ENCODE measurements at regions of chr15 and their contacts with region 1.

Region 1: DNA sequence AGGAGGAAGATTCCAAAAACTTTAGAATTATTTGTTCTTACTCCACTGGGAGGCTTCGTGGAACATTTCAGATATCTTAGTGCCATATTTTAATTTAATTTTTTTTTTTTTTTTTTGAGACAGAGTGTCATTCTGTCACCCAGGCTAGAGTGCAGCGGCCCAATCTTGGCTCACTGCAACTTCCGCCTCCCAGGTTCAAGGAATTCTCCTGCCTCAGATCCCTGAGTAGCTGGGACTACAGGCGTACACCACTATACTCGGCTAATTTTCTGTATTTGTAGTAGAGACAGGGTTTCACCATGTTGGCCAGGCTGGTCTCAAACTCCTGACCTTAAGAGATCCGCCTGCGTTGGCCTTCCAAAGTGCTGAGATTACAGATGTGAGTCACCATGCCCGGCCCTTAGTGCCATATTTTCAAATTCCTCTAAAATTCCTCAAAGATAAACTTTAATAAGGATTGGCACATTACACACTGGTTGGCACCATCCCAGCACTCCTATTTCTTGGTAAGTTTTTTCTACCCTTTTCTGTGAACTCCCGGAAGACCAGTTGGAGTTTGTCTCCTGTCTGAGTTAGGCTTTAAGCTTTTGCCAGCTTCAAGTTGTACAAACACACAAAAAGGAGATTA is 693.7 kb downstream of the MCTP2 start:
- DNase-seq: peak; percentile 41 to 77
- H3K4me3 ChIP-seq: no peak overlapping the region
- H3K27ac ChIP-seq: peak overlapping the region; percentile 8 to 59
- H3K4me1 ChIP-seq: peaks cover 0 to 55% (median 9%) of the 10 kb centered on the region in 4 donors
- H3K27me3 ChIP-seq: no peaks in the 10 kb centered on the region
- CTCF ChIP-seq: no peak

Region 2: GRCh38 chr15:94174399-94174802 is 750.7 kb before region 1 on chr15:
- intact Hi-C with region 1: no loop called
- DNase-seq: no peak
- H3K4me3 ChIP-seq: no peak overlapping the region
- H3K27ac ChIP-seq: no peak overlapping the region
- H3K4me1 ChIP-seq: no peaks in the 10 kb centered on the region
- H3K27me3 ChIP-seq: no peaks in the 10 kb centered on the region
- CTCF ChIP-seq: no peak

Region 3: DNA sequence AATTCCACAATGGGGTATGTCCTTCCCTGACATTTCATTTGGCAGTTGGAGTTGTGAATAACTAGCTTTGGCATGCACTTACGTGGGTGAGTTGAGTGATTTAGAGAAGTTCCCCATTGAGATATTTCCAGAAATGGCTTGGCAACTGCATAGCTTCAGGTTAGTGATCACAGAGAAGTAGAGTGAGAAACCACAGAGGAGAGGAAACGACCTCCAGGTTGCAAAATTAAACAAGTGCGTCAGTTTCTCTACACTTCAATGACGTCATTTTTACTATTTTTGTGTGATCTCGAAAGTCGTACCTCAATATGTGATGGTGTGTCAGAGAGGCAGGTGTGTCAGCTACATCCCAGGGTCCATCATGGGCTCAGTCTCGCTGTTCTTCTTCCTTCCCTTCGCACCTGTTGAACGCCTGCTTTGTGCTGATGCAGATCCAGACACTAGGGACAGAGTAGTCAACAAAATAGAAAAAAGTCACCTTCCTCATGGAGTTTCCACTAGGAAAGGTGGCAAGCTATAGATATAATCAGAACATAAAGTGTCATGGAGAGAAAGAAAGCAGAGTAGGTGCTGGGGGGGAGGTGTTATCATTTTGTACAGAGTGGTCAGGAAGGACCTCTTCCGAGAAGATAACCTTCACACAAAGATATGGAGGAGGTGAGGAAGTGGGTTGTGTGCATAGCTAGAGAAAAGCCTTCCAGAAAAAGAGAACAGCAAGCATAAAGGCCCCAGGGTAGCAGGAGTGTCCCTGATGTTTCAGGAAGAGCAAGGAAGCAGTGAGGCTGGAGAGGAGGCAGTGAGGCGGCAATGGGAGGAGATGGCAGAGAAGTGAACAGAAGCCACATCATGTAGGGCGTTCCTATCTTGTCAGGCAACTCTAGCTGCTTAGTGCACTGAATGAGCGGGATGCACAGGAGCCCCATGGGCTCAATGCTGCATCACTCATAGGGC is 618.1 kb before region 1 on chr15:
- intact Hi-C with region 1: no loop called
- DNase-seq: no peak
- H3K4me3 ChIP-seq: no peak overlapping the region
- H3K27ac ChIP-seq: no peak overlapping the region
- H3K4me1 ChIP-seq: no peaks in the 10 kb centered on the region
- H3K27me3 ChIP-seq: no peaks in the 10 kb centered on the region
- CTCF ChIP-seq: no peak

Region 4: GRCh38 chr15:94793641-94794040 is 131.4 kb before region 1 on chr15:
- intact Hi-C with region 1: no loop called
- DNase-seq: no peak
- H3K4me3 ChIP-seq: no peak overlapping the region
- H3K27ac ChIP-seq: no peak overlapping the region
- H3K4me1 ChIP-seq: no peaks in the 10 kb centered on the region
- H3K27me3 ChIP-seq: no peaks in the 10 kb centered on the region
- CTCF ChIP-seq: no peak

Region 5: GRCh38 chr15:94829887-94830884 is 94.9 kb before region 1 on chr15:
- intact Hi-C with region 1: loop called (anchors 10 kb)
- DNase-seq: no peak
- H3K4me3 ChIP-seq: no peak overlapping the region
- H3K27ac ChIP-seq: no peak overlapping the region
- H3K4me1 ChIP-seq: peaks cover 0 to 5% (median 0%) of the 10 kb centered on the region in 4 donors
- H3K27me3 ChIP-seq: no peaks in the 10 kb centered on the region
- CTCF ChIP-seq: no peak

Region 6: DNA sequence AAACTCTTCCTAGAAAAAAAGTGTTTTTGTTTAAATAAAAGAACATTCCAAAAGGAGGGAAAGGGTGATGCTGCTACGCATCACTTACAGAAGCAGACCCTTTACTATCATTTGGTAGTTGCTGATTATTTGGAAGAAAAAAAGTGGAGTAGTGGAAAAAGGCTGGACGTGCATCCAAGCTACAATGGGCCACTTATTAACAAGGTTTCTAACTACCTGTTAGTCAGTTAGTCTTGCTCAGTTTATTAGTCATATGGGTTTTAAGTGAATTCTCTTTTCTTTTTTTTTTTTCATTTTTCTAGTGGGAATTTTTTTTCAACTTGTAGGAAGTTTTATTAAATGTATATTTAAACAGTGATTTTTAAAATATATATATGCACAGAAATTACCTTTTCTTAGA is 172.3 kb after region 1 on chr15:
- intact Hi-C with region 1: no loop called
- DNase-seq: no peak
- H3K4me3 ChIP-seq: no peak overlapping the region
- H3K27ac ChIP-seq: no peak overlapping the region
- H3K4me1 ChIP-seq: no peaks in the 10 kb centered on the region
- H3K27me3 ChIP-seq: no peaks in the 10 kb centered on the region
- CTCF ChIP-seq: no peak

Measured in tibial artery (tissue), 4 donors.